Calu3 (cell line): ENCODE measurements at regions of chr9 and their contacts with region 1.

Region 1: DNA sequence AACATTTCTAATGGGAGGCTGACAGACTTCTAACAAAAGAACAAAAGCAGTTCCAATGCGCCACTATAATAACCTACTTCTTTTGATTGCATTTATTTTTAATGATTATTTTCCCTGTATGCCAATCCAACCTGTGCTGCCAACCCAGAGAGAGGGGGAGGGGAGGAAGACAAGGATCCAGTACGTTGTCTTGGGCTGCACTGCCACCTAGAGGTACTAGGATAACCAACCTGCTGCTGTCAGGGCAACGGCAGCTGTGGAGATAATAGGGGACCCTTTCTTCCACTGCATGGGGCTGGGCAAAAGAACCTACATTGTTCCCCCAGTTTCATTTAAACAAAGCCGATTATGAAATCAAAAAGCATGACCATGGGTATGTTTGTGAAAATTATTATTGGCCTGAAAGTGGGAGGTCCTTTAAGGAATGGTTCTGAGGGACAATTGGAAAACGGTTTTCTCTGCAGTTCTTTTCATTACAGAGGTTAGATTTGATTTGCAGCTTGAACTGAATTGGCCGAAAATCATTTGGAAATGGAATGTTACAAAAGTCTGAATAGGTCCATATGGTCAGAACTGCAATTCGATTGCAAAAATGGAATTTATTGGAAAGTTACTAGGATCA is 101.3 kb downstream of the RASEF start:
- DNase-seq: peak; percentile 80
- H3K4me3 Mint-ChIP-seq: no peak overlapping the region
- H3K27ac Mint-ChIP-seq: no peak overlapping the region
- H3K4me1 Mint-ChIP-seq: no peaks in the 10 kb centered on the region
- H3K27me3 Mint-ChIP-seq: no peaks in the 10 kb centered on the region
- CTCF ChIP-seq: peak; percentile 57

Region 2: DNA sequence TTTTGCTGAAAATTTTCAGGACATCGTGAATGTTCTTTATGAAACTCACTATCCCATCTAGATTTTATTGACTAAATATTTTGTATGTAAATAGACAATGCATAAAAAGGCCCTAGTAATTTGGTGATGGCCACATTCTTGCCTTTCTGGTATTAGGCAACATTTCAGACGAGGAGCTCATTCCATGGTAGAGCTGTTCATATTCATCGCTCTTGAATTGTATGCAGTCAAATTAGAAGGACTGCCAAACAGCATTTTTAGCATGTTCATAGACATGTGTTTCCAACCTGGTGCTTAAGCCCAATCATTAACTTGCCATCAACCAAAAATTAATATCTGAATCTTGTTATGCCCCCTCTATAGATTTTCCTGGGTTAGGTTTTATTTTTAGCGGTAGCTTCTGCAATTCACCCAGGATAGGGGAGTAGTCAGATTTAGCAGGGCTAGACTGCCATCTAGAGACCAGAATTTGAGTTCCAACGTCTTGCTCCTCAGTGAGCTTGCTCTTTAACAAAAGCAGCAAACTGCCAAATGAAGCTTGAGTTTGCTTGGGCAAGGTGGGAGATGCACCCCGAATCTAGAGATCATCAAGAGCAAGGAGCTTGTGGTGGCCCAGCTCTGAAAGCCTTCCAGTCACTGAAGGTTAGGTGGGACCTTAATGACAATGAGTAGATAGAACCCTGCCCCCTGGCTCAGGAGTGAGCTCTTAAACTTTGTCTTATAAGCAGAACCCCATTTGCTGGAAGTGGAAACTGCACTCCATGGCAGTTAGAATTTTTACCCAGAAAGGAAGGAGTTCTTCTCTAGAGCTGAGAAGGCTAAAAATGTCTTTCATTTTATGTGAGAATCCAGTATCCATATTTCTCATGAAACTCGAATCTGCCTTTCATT is 354.9 kb before region 1 on chr9:
- CTCF ChIA-PET with region 1: no interaction called
- intact Hi-C with region 1: loop called (anchors 5 kb)
- DNase-seq: peak; percentile 48
- H3K4me3 Mint-ChIP-seq: no peak overlapping the region
- H3K27ac Mint-ChIP-seq: no peak overlapping the region
- H3K4me1 Mint-ChIP-seq: no peaks in the 10 kb centered on the region
- H3K27me3 Mint-ChIP-seq: no peaks in the 10 kb centered on the region
- CTCF ChIP-seq: peak; percentile 24